ENCODE measurements at regions of chr13 and their contacts with region 1.

Region 1: DNA sequence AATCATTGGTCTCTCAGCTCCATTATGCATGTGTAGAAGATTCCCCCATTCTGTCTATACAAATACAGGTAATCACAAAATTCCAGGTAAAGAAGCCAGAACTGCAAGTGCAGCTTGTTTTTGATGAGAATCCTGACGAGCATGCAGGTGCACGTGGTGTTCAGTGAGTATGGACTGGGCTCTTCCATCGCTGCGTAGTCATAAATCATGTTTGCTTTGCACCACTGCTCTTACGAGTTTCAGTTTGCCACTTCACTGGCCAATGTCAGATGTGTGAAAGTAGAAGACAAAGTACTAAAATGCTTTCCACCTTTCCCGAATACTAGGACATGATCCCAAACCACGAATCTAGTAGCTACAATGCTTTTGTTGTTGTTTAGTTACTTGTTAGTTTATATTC is 390.7 kb downstream of the LIG4 start:
- DNase-seq: no peak
- ATAC-seq: no peak
- H3K4me3 ChIP-seq: no peak overlapping the region
- H3K27ac ChIP-seq: no peak overlapping the region
- H3K4me1 ChIP-seq: peaks cover 19% of the 10 kb centered on the region
- H3K27me3 ChIP-seq: no peaks in the 10 kb centered on the region
- CTCF ChIP-seq: no peak

Region 2: GRCh38 chr13:107807306-107808073 is 17.1 kb before region 1 on chr13:
- CTCF ChIA-PET with region 1: no interaction called
- POLR2A ChIA-PET with region 1: no interaction called
- intact Hi-C with region 1: no loop called
- DNase-seq: peak; percentile 39
- ATAC-seq: peak; percentile 92
- H3K4me3 ChIP-seq: no peak overlapping the region
- H3K27ac ChIP-seq: peak overlapping the region; percentile 28
- H3K4me1 ChIP-seq: peaks cover 22% of the 10 kb centered on the region
- H3K27me3 ChIP-seq: no peaks in the 10 kb centered on the region
- CTCF ChIP-seq: no peak

Region 3: GRCh38 chr13:107835339-107836018 is 10.8 kb after region 1 on chr13:
- CTCF ChIA-PET with region 1: no interaction called
- POLR2A ChIA-PET with region 1: no interaction called
- intact Hi-C with region 1: loop called (anchors 1 kb)
- DNase-seq: peak; percentile 92
- ATAC-seq: peak; percentile 97
- H3K4me3 ChIP-seq: peak overlapping the region; percentile 52
- H3K27ac ChIP-seq: peak overlapping the region; percentile 71
- H3K4me1 ChIP-seq: peaks cover 23% of the 10 kb centered on the region
- H3K27me3 ChIP-seq: no peaks in the 10 kb centered on the region
- CTCF ChIP-seq: no peak

Region 4: DNA sequence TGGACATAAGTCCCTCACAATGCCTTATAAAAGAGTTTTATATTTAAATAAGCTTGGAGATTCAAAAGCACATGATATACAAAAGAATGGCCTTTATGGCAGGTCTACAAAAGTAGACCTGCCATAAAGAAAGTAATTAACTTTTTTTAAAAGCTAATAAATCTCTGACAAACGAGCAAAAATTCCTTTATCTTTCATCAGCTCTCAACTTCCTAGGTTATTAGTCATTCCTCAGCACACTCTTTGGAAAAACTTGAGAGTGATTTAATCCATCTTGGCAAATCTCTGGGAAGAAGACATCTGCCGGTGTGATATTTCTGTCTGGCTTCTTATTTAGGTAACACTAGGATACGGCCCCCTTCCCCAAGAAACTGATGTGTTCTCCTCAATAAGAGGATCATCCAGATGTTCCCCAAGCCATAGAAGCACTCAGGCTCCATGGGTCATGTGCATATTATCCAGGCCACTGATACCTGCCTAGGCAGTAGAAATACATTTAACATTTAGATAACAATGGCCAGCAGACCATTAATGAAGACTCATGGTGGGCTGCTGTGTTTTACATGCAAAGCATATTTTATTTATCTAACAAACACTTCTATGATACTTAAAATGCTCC is 18.0 kb after region 1 on chr13:
- CTCF ChIA-PET with region 1: no interaction called
- POLR2A ChIA-PET with region 1: no interaction called
- intact Hi-C with region 1: loop called (anchors 1 kb)
- DNase-seq: peak; percentile 80
- ATAC-seq: peak; percentile 79
- H3K4me3 ChIP-seq: no peak overlapping the region
- H3K27ac ChIP-seq: no peak overlapping the region
- H3K4me1 ChIP-seq: peaks cover 15% of the 10 kb centered on the region
- H3K27me3 ChIP-seq: no peaks in the 10 kb centered on the region
- CTCF ChIP-seq: no peak

Region 5: DNA sequence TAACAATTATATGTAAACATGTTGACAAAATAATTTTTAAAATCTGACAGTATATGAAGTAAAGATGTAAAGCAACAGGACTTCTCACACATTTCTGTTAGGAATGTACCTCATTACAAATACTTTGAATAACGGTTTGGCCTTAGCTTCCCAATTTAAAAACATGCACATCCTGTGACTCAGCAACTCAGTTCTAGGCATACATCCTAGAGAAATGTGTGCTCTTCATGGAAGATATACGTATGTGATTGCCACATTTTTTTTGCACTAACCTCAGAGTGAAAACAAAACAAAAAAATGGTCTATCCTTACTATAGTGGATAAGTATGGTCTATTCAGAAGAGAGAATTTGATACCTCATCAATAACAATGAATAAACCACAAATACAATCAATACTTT is 76.1 kb after region 1 on chr13:
- CTCF ChIA-PET with region 1: no interaction called
- POLR2A ChIA-PET with region 1: no interaction called
- intact Hi-C with region 1: no loop called
- DNase-seq: peak; percentile 31
- ATAC-seq: no peak
- H3K4me3 ChIP-seq: no peak overlapping the region
- H3K27ac ChIP-seq: no peak overlapping the region
- H3K4me1 ChIP-seq: no peaks in the 10 kb centered on the region
- H3K27me3 ChIP-seq: no peaks in the 10 kb centered on the region
- CTCF ChIP-seq: no peak

Measured in PC-3 (cell line).